Mammary epithelial cell (primary cell): ENCODE measurements at regions of chr5 and their contacts with region 1.

Region 1: GRCh38 chr5:92946546-92946945 is 634.5 kb downstream of the NR2F1-AS1 start:
- DNase-seq: no peak
- H3K4me3 ChIP-seq: no peak overlapping the region
- H3K27ac ChIP-seq: no peak overlapping the region
- H3K4me1 ChIP-seq: no peaks in the 10 kb centered on the region
- H3K27me3 ChIP-seq: no peaks in the 10 kb centered on the region
- CTCF ChIP-seq: no peak

Region 2: DNA sequence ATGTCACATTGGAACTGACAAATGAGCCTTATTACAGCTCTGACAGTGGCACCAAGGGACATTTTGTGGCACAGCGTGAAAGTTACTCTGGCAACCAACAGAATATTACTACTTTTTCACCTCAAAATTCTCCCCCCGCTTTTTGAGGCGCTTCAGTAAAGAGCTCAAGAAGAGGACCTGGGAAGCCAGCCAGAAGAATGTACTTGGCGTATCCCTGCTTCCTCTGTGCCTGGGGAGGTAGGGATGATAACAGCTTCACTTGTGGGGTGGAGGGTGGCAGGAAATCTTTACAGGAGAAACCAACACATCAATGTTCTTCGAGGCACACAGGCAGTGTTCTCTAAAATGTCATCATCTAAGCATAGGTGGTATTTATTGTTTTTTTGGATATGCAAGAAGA is 10.3 kb after region 1 on chr5:
- CTCF ChIA-PET with region 1: interaction called, 11 read pairs
- dilution Hi-C with region 1: no loop called
- in situ Hi-C with region 1: no loop called
- intact Hi-C with region 1: no loop called
- DNase-seq: no peak
- H3K4me3 ChIP-seq: no peak overlapping the region
- H3K27ac ChIP-seq: no peak overlapping the region
- H3K4me1 ChIP-seq: no peaks in the 10 kb centered on the region
- H3K27me3 ChIP-seq: no peaks in the 10 kb centered on the region
- CTCF ChIP-seq: no peak